Heart left ventricle (tissue), 16 donors: ENCODE measurements at regions of chr10 and their contacts with region 1.

Region 1: DNA sequence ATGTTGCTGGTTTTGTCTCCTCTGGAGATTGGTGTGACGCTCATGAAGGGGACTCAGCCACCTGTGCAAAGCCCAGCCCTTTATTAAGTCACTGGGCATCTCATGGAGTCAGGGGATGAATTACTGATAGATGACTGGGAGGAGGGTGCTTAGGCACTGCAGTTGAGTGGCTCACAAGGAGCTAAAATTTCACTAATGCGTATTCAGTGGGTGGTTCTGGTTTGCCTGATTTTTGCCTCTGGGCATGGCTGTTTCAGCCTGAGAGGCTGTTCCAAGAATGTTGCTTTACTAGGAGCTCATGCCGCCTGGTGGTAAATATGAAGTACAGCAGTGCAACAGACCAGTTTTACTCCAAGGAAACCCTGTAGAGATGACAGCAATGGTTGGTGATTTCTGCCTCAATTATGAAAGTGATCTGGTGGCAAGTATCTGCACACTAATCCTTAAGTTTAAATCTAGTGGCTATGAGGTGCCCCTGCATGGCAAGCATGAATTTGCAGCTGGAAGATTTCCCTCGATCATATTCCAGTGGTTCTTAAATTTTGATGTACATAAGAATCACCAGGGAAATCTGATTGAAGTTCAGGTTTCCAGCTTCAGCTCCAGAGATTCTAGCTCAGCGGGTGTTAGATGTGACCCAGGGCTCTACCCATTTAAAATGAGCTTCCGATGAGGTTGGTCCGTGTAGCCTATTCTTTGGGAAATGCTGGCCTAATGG is 19.9 kb downstream of the ACTA2 start:
- DNase-seq: peak in 4 of 5 donors; percentile 50 to 62 (median 56)
- ATAC-seq: peak; percentile 72 to 85 (median 78)
- H3K4me3 ChIP-seq: no peak overlapping the region
- H3K27ac ChIP-seq: peak overlapping the region in 8 of 12 donors; percentile 22 to 78 (median 40)
- H3K4me1 ChIP-seq: peaks cover 0 to 52% (median 12%) of the 10 kb centered on the region in 12 donors
- H3K27me3 ChIP-seq: no peaks in the 10 kb centered on the region
- CTCF ChIP-seq: peak; percentile 76 to 93 (median 90)
- POLR2A ChIP-seq: no peak

Region 2: GRCh38 chr10:88810196-88810961 is 122.3 kb before region 1 on chr10:
- intact Hi-C with region 1: no loop called
- DNase-seq: no peak
- ATAC-seq: peak in 1 of 4 donors; percentile 49
- H3K4me3 ChIP-seq: no peak overlapping the region
- H3K27ac ChIP-seq: no peak overlapping the region
- H3K4me1 ChIP-seq: no peaks in the 10 kb centered on the region
- H3K27me3 ChIP-seq: peaks cover 0 to 8% (median 0%) of the 10 kb centered on the region in 9 donors
- CTCF ChIP-seq: peak; percentile 39 to 68 (median 56)
- POLR2A ChIP-seq: no peak

Region 3: DNA sequence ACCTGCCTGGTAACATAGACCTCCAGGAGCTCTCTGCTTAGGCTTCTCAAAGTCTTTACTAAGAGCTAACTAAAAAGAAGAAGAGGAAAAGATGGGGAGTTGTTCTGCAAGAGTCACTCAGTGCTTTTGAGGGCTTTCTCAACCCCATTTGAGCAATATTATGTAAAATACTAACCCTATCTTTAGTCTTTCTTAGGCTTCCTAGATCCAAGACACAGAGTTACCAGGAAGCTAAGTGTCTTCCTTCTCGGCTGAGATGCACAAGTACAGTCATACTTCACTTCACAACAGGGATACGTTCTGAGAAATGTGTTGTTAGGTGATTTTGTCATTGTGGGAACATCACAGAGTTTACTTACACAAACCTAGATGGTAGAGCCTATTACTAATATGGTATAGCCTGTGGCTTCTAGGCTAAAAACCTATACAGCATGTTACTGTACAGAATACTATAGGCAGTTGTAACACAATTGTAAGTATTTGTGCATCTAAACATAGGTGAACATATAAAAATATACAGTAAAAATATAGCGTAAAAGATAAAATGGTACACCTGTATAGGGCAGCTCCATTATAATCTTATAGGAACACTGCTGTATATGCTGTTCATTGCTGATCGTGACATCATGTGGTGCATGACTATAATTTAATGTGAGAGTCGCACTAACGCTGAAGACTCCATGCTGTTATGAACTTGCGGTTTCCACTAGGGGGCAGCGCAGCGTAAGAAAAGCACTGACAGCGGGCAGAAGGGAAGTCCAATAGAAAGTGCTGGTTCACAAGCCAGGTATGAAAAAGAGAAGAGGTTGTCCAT is 97.4 kb before region 1 on chr10:
- intact Hi-C with region 1: loop called (anchors 1 to 2 kb)
- DNase-seq: peak; percentile 81 to 91 (median 84)
- ATAC-seq: peak; percentile 81 to 97 (median 95)
- H3K4me3 ChIP-seq: no peak overlapping the region
- H3K27ac ChIP-seq: peak overlapping the region in 1 of 12 donors; percentile 2
- H3K4me1 ChIP-seq: peaks cover 0 to 31% (median 0%) of the 10 kb centered on the region in 12 donors
- H3K27me3 ChIP-seq: no peaks in the 10 kb centered on the region
- CTCF ChIP-seq: peak; percentile 79 to 95 (median 86)
- POLR2A ChIP-seq: no peak

Region 4: GRCh38 chr10:88865281-88865876 is 67.3 kb before region 1 on chr10:
- intact Hi-C with region 1: no loop called
- DNase-seq: no peak
- ATAC-seq: no peak
- H3K4me3 ChIP-seq: no peak overlapping the region
- H3K27ac ChIP-seq: no peak overlapping the region
- H3K4me1 ChIP-seq: no peaks in the 10 kb centered on the region
- H3K27me3 ChIP-seq: no peaks in the 10 kb centered on the region
- CTCF ChIP-seq: peak in 5 of 12 donors; percentile 19 to 32 (median 23)
- POLR2A ChIP-seq: no peak

Region 5: GRCh38 chr10:88880282-88881076 is 52.2 kb before region 1 on chr10:
- intact Hi-C with region 1: loop called in 8 of 10 experiments (anchors 2 to 5 kb)
- DNase-seq: peak; percentile 82 to 92 (median 87)
- ATAC-seq: peak; percentile 91 to 99 (median 97)
- H3K4me3 ChIP-seq: peak overlapping the region; percentile 53 to 86 (median 72)
- H3K27ac ChIP-seq: peak overlapping the region; percentile 78 to 98 (median 90)
- H3K4me1 ChIP-seq: peaks cover 0 to 51% (median 9%) of the 10 kb centered on the region in 12 donors
- H3K27me3 ChIP-seq: no peaks in the 10 kb centered on the region
- CTCF ChIP-seq: peak in 7 of 12 donors; percentile 7 to 56 (median 42)
- POLR2A ChIP-seq: peak in 1 of 2 donors; percentile 35

Region 6: GRCh38 chr10:89029785-89030437 is 97.2 kb after region 1 on chr10:
- intact Hi-C with region 1: loop called in 3 of 10 experiments (anchors 2 to 5 kb)
- DNase-seq: peak; percentile 79 to 83 (median 80)
- ATAC-seq: peak in 3 of 4 donors; percentile 64 to 76 (median 71)
- H3K4me3 ChIP-seq: peak overlapping the region in 1 of 12 donors; percentile 21
- H3K27ac ChIP-seq: peak overlapping the region in 2 of 12 donors; percentile 9 to 27
- H3K4me1 ChIP-seq: peaks cover 0 to 35% (median 8%) of the 10 kb centered on the region in 12 donors
- H3K27me3 ChIP-seq: no peaks in the 10 kb centered on the region
- CTCF ChIP-seq: peak; percentile 87 to 97 (median 94)
- POLR2A ChIP-seq: no peak

Region 7: DNA sequence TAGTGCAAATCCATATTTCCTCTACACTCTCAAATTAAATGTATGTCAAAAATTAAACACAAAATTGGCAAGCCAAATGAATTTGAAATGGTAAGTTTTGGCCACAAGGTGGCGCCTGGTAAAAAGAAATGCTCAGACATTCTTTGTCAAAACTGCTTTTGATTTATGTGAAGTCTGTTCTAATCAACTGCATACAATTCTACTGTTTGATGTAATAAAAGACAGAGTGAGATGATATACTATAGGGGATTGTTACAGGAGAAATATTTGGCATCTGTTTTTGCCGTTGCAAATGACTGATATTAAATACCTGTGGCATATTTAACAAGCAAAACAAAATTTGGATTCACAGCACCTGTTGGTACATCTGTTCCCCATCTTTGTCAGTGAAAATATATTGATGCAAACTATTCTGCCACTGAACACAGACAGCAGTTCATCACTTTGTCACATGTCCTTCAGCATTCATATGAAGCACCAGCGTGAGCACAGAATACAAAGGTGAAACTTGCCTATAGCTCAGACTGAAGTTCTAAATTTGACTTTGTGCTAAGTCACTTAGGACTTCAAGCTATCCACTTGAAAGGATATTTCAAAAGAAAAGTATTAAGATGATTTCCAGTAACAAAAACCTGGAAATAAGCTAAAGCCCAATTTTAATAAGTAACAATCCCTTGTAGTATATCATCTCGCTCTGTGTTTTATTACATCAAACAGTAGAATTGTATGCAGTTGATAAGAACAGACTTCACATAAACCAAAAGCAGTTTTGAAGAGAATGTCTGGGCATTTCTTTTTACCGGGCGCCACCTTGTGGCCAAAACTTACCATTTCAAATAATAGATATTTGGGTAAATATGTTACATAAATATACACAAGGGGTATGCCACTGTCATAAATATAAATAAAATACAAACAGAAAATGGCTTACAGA is 284.6 kb after region 1 on chr10:
- intact Hi-C with region 1: loop called in 9 of 10 experiments (anchors 1 to 5 kb)
- DNase-seq: peak in 3 of 5 donors; percentile 40 to 58 (median 47)
- ATAC-seq: peak in 2 of 4 donors; percentile 25 to 55
- H3K4me3 ChIP-seq: no peak overlapping the region
- H3K27ac ChIP-seq: peak overlapping the region in 10 of 12 donors; percentile 6 to 64 (median 34)
- H3K4me1 ChIP-seq: peaks cover 0 to 19% (median 7%) of the 10 kb centered on the region in 12 donors
- H3K27me3 ChIP-seq: no peaks in the 10 kb centered on the region
- CTCF ChIP-seq: peak; percentile 71 to 87 (median 81)
- POLR2A ChIP-seq: no peak